CD8-positive, alpha-beta T cell (primary cell): ENCODE measurements at regions of chr2 and their contacts with region 1.

Region 1: DNA sequence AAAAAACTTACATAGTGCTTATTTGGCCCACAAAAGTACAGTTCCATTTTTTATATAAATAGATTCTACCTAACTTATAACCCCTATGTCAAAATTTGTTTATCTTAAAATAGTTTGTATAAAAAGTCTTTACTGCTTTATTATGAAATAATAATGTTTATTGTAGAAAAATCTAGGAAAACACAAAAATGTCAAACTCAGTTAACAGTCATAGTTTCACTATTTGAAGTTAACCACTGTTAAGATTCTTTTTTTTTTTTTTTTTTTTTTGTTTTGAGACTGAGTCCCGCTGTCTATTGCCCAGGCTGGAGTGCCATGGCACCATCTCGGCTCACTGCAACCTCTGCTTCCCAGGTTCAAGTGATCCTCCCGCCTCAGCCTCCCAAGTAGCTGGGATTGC is 26.5 kb upstream of the ABI2 start:
- DNase-seq: no peak
- ATAC-seq: no peak
- H3K4me3 ChIP-seq: no peak overlapping the region
- H3K4me3 Mint-ChIP-seq: no peak overlapping the region
- H3K27ac ChIP-seq: no peak overlapping the region
- H3K27ac Mint-ChIP-seq: no peak overlapping the region
- H3K4me1 ChIP-seq: no peaks in the 10 kb centered on the region
- H3K4me1 Mint-ChIP-seq: no peaks in the 10 kb centered on the region
- H3K27me3 ChIP-seq: no peaks in the 10 kb centered on the region
- H3K27me3 Mint-ChIP-seq: no peaks in the 10 kb centered on the region
- CTCF ChIP-seq: no peak

Region 2: GRCh38 chr2:202307690-202308089 is 994.0 kb before region 1 on chr2:
- CTCF ChIA-PET with region 1: no interaction called
- POLR2A ChIA-PET with region 1: no interaction called
- intact Hi-C with region 1: loop called in 1 of 2 experiments (anchors 5 kb)
- DNase-seq: no peak
- ATAC-seq: no peak
- H3K4me3 ChIP-seq: no peak overlapping the region
- H3K4me3 Mint-ChIP-seq: no peak overlapping the region
- H3K27ac ChIP-seq: no peak overlapping the region
- H3K27ac Mint-ChIP-seq: no peak overlapping the region
- H3K4me1 ChIP-seq: no peaks in the 10 kb centered on the region
- H3K4me1 Mint-ChIP-seq: no peaks in the 10 kb centered on the region
- H3K27me3 ChIP-seq: no peaks in the 10 kb centered on the region
- H3K27me3 Mint-ChIP-seq: no peaks in the 10 kb centered on the region
- CTCF ChIP-seq: no peak

Region 3: GRCh38 chr2:202870431-202871299 is 431.0 kb before region 1 on chr2:
- CTCF ChIA-PET with region 1: no interaction called
- POLR2A ChIA-PET with region 1: no interaction called
- intact Hi-C with region 1: no loop called
- DNase-seq: peak; percentile 31 to 80 (median 63)
- ATAC-seq: peak; percentile 79
- H3K4me3 ChIP-seq: peak overlapping the region; percentile 56 to 97
- H3K4me3 Mint-ChIP-seq: peak overlapping the region; percentile 97
- H3K27ac ChIP-seq: peak overlapping the region; percentile 48 to 60
- H3K27ac Mint-ChIP-seq: peak overlapping the region; percentile 83
- H3K4me1 ChIP-seq: no peaks in the 10 kb centered on the region
- H3K4me1 Mint-ChIP-seq: peaks cover 9% of the 10 kb centered on the region
- H3K27me3 ChIP-seq: no peaks in the 10 kb centered on the region
- H3K27me3 Mint-ChIP-seq: no peaks in the 10 kb centered on the region
- CTCF ChIP-seq: peak; percentile 69

Region 4: DNA sequence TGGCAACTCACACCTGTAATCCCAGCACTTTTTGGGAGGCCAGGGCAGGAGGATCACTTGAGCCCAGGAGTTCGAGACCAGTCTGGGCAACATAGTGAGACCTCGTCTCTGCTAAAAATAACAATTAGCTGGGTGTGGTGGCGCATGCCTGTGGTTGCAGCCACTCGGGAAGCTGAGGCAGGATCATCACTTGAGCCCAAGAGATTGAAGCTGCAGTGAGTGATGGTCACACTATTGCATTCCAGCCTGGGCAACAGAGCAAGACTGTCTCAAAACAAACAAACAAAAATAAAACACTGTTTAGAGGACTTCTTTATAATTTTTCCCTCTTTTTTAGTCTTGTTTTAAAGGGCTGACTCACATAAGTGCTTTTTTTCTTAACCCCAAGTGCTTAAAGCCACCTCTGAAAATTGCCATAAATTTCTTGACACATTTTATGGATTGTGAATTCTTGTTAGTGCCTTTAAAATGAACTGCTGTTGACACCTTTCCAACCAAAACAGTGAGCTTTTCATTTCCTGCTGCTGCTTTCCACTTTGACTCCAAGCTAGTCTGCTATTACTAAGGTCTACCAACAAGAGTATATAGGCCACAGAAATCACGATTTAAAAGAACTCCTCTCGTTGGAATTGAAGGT is 21.1 kb before region 1 on chr2:
- CTCF ChIA-PET with region 1: no interaction called
- POLR2A ChIA-PET with region 1: no interaction called
- intact Hi-C with region 1: no loop called
- DNase-seq: no peak
- ATAC-seq: no peak
- H3K4me3 ChIP-seq: no peak overlapping the region
- H3K4me3 Mint-ChIP-seq: no peak overlapping the region
- H3K27ac ChIP-seq: no peak overlapping the region
- H3K27ac Mint-ChIP-seq: no peak overlapping the region
- H3K4me1 ChIP-seq: no peaks in the 10 kb centered on the region
- H3K4me1 Mint-ChIP-seq: no peaks in the 10 kb centered on the region
- H3K27me3 ChIP-seq: no peaks in the 10 kb centered on the region
- H3K27me3 Mint-ChIP-seq: no peaks in the 10 kb centered on the region
- CTCF ChIP-seq: no peak

Region 5: GRCh38 chr2:204282525-204282924 is 980.9 kb after region 1 on chr2:
- CTCF ChIA-PET with region 1: no interaction called
- POLR2A ChIA-PET with region 1: no interaction called
- intact Hi-C with region 1: no loop called
- DNase-seq: no peak
- ATAC-seq: no peak
- H3K4me3 ChIP-seq: no peak overlapping the region
- H3K4me3 Mint-ChIP-seq: no peak overlapping the region
- H3K27ac ChIP-seq: no peak overlapping the region
- H3K27ac Mint-ChIP-seq: no peak overlapping the region
- H3K4me1 ChIP-seq: no peaks in the 10 kb centered on the region
- H3K4me1 Mint-ChIP-seq: no peaks in the 10 kb centered on the region
- H3K27me3 ChIP-seq: no peaks in the 10 kb centered on the region
- H3K27me3 Mint-ChIP-seq: peaks cover 12% of the 10 kb centered on the region
- CTCF ChIP-seq: no peak